ENCODE measurements at regions of chr1 and their contacts with region 1.

Region 1: DNA sequence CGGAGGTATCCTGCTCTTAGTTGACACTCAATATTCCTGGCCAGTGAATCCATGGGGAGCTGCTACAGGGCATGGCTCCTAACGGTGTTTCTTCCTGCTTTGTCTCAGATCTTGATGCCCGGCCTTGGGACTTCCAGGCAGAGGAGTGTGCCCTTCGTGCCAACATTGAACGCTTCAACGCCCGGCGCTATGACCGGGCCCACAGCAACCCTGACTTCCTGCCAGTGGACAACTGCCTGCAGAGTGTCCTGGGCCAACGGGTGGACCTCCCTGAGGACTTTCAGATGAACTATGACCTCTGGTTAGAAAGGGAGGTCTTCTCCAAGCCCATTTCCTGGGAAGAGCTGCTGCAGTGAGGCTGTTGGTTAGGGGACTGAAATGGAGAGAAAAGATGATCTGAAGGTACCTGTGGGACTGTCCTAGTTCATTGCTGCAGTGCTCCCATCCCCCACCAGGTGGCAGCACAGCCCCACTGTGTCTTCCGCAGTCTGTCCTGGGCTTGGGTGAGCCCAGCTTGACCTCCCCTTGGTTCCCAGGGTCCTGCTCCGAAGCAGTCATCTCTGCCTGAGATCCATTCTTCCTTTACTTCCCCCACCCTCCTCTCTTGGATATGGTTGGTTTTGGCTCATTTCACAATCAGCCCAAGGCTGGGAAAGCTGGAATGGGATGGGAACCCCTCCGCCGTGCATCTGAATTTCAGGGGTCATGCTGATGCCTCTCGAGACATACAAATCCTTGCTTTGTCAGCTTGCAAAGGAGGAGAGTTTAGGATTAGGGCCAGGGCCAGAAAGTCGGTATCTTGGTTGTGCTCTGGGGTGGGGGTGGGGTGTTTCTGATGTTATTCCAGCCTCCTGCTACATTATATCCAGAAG is 16.7 kb downstream of the ALX3 start:
- DNase-seq: peak; percentile 36 to 60 (median 53)
- H3K4me3 ChIP-seq: no peak overlapping the region
- H3K4me3 Mint-ChIP-seq: no peak overlapping the region
- H3K27ac ChIP-seq: no peak overlapping the region
- H3K27ac Mint-ChIP-seq: peak overlapping the region in 3 of 7 donors; percentile 37 to 83 (median 49)
- H3K4me1 ChIP-seq: no peaks in the 10 kb centered on the region
- H3K4me1 Mint-ChIP-seq: peaks cover 1 to 9% (median 5%) of the 10 kb centered on the region in 4 donors
- H3K27me3 ChIP-seq: no peaks in the 10 kb centered on the region
- H3K27me3 Mint-ChIP-seq: no peaks in the 10 kb centered on the region

Region 2: GRCh38 chr1:110068646-110069403 is 15.0 kb after region 1 on chr1:
- CTCF ChIA-PET with region 1: interaction called, 34 read pairs
- POLR2A ChIA-PET with region 1: interaction called, 4 read pairs
- intact Hi-C with region 1: no loop called
- DNase-seq: peak in 3 of 5 donors; percentile 27 to 37 (median 34)
- H3K4me3 ChIP-seq: peak overlapping the region in 1 of 2 donors; percentile 11
- H3K4me3 Mint-ChIP-seq: peak overlapping the region; percentile 56 to 92 (median 76)
- H3K27ac ChIP-seq: no peak overlapping the region
- H3K27ac Mint-ChIP-seq: peak overlapping the region in 1 of 7 donors; percentile 11
- H3K4me1 ChIP-seq: peaks cover 28% of the 10 kb centered on the region
- H3K4me1 Mint-ChIP-seq: peaks cover 8 to 25% (median 16%) of the 10 kb centered on the region in 4 donors
- H3K27me3 ChIP-seq: peaks cover 28% of the 10 kb centered on the region
- H3K27me3 Mint-ChIP-seq: peaks cover 31 to 40% of the 10 kb centered on the region in 2 donors